Cardiac septum (tissue), 1 donor: ENCODE measurements at regions of chr12 and their contacts with region 1.

Region 1: GRCh38 chr12:95532851-95533250 is 18.4 kb downstream of the USP44 start:
- DNase-seq: no peak

Region 2: DNA sequence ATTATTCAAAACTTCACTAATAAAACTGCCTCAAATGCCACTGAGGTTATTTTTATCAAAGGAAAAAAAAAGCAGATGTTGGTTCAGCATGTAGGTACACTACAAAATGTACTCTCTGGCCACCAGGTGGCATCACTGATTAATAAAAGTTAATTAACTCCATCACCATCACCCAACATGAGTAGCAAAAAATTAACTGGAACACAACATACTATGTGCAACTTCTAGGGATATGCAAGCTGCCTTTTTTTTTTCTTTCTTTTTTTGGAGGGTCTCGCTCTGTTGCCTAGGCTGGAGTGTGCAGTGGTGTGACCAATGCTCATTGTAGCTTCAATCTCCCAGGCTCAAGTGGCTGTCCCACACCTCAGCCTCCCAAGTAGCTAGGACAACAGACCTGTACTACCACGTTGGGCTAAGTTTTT is 415.7 kb before region 1 on chr12:
- intact Hi-C with region 1: loop called (anchors 2 kb)
- DNase-seq: no peak

Region 3: GRCh38 chr12:95351748-95352147 is 181.1 kb before region 1 on chr12:
- intact Hi-C with region 1: loop called (anchors 5 kb)
- DNase-seq: no peak